ENCODE measurements at regions of chr11 and their contacts with region 1.

Region 1: GRCh38 chr11:747158-748006 is at the start of gene TALDO1:
- DNase-seq: peak; percentile 95
- ATAC-seq: peak; percentile 96
- total RNA-seq, gene TALDO1: 187 TPM

Region 2: GRCh38 chr11:1193326-1194230 is 446.2 kb after region 1 on chr11:
- intact Hi-C with region 1: no loop called
- DNase-seq: peak; percentile 53
- ATAC-seq: peak; percentile 15

Region 3: GRCh38 chr11:1863352-1864216 is 1116.2 kb after region 1 on chr11:
- intact Hi-C with region 1: no loop called
- DNase-seq: peak; percentile 87
- ATAC-seq: peak; percentile 92

Region 4: DNA sequence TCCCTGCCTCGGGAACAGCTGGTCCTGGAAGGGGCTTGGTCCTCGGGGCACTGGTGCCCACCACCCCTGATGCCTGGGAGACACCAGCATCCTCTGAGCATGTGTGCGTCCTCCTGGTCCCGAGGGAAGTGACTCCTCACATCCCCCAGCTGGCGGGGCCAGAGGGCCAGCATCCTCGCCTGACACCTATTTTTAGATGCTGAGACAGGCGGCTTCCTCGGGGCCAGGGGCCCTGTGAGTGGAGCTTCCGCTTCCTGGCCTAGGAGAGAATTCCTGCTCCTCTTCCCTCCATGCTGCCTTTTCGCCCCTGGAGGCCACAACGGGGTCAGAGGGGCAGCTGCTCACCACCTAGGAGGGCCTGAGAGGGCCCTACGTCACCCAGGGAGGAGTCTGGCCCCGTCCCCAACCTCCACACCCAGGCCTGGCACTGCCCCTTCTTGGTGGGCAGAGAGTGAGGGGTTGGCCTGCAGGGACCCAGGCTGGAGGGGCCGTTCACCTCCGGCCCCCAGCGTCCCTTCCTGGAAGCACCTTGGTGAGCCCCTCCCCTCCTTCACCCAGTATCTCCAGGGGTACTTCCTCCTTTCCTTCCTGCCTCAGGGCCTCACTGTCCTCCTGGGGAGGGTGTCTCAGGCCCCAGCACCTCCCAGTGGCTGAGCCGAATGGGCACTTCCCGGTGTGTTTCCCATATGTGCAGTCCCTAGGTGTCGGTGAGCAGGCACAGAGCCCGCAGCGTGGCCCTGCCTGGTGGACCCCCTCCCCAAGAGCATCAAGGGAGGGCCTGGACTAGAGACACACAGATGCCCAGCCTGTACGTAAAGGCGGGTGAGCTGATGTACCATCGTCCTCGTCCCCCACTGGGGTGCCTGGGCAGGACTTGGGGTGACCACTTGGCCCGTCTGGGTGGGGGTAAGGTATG is 1635.8 kb after region 1 on chr11:
- intact Hi-C with region 1: loop called (anchors 10 kb)
- DNase-seq: no peak
- ATAC-seq: peak; percentile 14

Measured in sciatic nerve (tissue), 2 donors.